Activated CD4-positive, alpha-beta T cell treated with anti-CD3 and anti-CD28 coated beads, Interleukin-2, amount 10 ng/mL, durations not matched to agents 24 days and 14 days (primary cell): ENCODE measurements at regions of chr3 and their contacts with region 1.

Region 1: GRCh38 chr3:192831111-192831644 is 86.5 kb downstream of the MB21D2 start:
- DNase-seq: peak; percentile 66
- H3K4me3 Mint-ChIP-seq: peak overlapping the region; percentile 26
- H3K27ac Mint-ChIP-seq: peak overlapping the region; percentile 83
- H3K4me1 Mint-ChIP-seq: peaks cover 39% of the 10 kb centered on the region
- H3K27me3 Mint-ChIP-seq: no peaks in the 10 kb centered on the region

Region 2: GRCh38 chr3:192899540-192899982 is 68.4 kb after region 1 on chr3:
- intact Hi-C with region 1: loop called (anchors 1 kb)
- DNase-seq: no peak
- H3K4me3 Mint-ChIP-seq: peak overlapping the region; percentile 65
- H3K27ac Mint-ChIP-seq: peak overlapping the region; percentile 85
- H3K4me1 Mint-ChIP-seq: peaks cover 62% of the 10 kb centered on the region
- H3K27me3 Mint-ChIP-seq: peaks cover 20% of the 10 kb centered on the region

Region 3: DNA sequence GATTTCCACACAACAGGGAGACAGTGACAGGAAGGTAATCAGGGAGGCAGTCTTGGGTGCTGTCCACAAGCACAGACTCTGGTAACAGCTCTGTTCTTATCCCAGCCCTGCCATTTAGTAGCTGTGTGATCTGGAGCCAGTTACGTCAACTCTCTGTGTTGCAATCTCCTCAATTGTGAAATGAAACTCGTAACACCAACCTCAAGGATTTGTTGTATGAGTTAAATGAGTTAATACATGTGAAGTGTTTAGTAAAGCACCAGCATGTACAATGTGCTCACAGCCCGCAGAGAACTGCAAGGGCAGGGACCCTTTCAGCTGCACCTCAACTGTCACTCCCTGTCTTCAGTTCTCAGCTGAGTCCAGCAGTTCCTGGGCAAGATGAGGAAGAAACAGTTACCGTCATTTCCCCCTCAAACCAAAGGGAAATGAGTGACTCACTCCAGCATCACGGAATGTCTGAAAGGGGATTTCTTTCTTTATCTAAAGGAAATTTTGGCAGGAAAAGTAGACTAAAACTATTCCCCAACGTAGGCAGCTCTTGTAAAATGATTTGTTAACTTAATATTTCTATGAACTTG is 126.4 kb after region 1 on chr3:
- intact Hi-C with region 1: loop called (anchors 1 kb)
- DNase-seq: peak; percentile 67
- H3K4me3 Mint-ChIP-seq: peak overlapping the region; percentile 24
- H3K27ac Mint-ChIP-seq: peak overlapping the region; percentile 78
- H3K4me1 Mint-ChIP-seq: peaks cover 24% of the 10 kb centered on the region
- H3K27me3 Mint-ChIP-seq: no peaks in the 10 kb centered on the region

Region 4: DNA sequence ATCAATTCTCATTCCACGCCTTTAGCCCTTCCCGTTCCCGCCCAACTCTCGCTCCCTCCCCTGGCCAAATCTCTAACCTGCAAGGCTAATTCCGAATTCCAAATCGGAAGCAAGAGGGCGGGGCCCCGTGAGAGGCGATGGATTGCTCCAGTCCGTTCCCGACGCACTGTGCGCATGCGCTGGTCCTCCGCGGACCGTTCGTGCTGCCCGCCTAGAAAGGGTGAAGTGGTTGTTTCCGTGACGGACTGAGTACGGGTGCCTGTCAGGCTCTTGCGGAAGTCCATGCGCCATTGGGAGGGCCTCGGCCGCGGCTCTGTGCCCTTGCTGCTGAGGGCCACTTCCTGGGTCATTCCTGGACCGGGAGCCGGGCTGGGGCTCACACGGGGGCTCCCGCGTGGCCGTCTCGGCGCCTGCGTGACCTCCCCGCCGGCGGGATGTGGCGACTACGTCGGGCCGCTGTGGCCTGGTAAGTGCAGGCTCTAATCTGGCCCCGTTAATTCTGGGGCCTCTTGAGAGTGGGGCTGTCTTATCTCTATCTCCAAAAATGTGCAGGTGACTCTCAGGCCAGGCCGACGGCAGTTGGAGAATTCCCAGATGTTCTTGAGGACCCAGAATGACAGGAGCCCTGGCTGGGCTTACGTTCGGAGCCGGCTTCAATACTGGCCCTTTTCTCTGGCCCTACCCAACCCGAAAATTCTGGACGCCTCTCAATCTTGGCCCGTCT is 761.9 kb after region 1 on chr3 and contains the start of gene OPA1:
- intact Hi-C with region 1: loop called (anchors 10 kb)
- DNase-seq: peak; percentile 98
- H3K4me3 Mint-ChIP-seq: peak within 1 kb of the TSS; percentile 98
- H3K27ac Mint-ChIP-seq: peak within 1 kb of the TSS; percentile 99
- H3K4me1 Mint-ChIP-seq: peaks cover 27% of the 10 kb centered on the region
- H3K27me3 Mint-ChIP-seq: no peaks in the 10 kb centered on the region
- total RNA-seq, gene OPA1: 91.2 and 92.2 TPM in 2 replicates